ENCODE measurements at regions of chr6 and their contacts with region 1.

Region 1: GRCh38 chr6:16761471-16762267 is 409 bp upstream of the ATXN1 start:
- DNase-seq: peak; percentile 70 to 88
- H3K4me3 ChIP-seq: peak overlapping the region; percentile 63 to 84 (median 66)
- H3K27ac ChIP-seq: no peak overlapping the region
- H3K4me1 ChIP-seq: peaks cover 8 to 22% (median 10%) of the 10 kb centered on the region in 4 experiments; a peak in 6 of 7 replicates
- H3K27me3 ChIP-seq: peaks cover 1 to 24% (median 12%) of the 10 kb centered on the region in 4 experiments; a peak in 6 of 7 replicates
- CTCF ChIP-seq: peak in 1 of 3 experiments; percentile 18; a peak in 1 of 4 replicates
- EP300 ChIP-seq: no peak
- POLR2A ChIP-seq: peak in 1 of 2 experiments; percentile 13; a peak in 1 of 3 replicates
- RAD21 ChIP-seq: peak in 1 of 2 experiments; percentile 40; a peak in 2 of 4 replicates

Region 2: DNA sequence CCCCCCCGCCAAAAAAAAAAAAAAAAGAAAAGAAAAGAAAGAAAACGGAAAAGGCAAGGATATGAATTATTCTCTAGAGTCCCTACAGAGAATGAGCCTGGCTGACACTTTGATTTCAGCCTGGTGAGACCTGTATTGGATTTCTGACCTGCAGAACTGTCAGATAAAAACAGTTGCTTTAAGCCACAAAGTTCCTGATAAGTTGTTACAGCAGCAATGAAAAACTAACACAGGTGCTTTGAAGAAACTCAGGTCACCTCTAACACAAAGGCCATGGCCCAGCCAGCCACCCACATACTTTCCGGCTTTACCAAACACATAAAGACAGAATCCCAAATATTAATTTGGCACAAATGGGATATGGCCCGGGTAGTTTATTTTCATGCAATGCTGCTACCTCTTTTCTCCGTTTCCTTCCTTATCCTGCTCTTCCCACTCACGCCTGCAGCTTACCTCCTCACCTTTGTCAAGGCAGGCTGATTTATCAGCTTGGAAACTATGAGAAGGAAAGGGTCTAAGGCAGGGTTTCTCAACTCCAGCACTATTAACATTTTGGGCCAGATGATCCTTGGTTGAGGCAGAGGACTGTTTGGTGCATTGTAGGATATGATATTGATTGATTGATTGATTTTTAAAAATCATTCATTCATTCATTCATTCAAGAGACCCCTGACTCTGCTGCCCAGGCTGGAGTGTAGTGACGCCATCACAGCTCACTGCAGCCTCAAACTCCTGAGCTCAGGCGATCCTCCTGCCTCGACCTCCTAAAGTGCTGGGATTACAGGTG is 88.5 kb before region 1 on chr6:
- CTCF ChIA-PET with region 1: no interaction called
- POLR2A ChIA-PET with region 1: no interaction called
- DNase-seq: no peak
- H3K4me3 ChIP-seq: no peak overlapping the region
- H3K27ac ChIP-seq: no peak overlapping the region
- H3K4me1 ChIP-seq: peaks cover 0 to 4% (median 2%) of the 10 kb centered on the region in 4 experiments; a peak in 3 of 7 replicates
- H3K27me3 ChIP-seq: no peaks in the 10 kb centered on the region
- CTCF ChIP-seq: no peak
- EP300 ChIP-seq: no peak
- POLR2A ChIP-seq: no peak
- RAD21 ChIP-seq: no peak

Region 3: DNA sequence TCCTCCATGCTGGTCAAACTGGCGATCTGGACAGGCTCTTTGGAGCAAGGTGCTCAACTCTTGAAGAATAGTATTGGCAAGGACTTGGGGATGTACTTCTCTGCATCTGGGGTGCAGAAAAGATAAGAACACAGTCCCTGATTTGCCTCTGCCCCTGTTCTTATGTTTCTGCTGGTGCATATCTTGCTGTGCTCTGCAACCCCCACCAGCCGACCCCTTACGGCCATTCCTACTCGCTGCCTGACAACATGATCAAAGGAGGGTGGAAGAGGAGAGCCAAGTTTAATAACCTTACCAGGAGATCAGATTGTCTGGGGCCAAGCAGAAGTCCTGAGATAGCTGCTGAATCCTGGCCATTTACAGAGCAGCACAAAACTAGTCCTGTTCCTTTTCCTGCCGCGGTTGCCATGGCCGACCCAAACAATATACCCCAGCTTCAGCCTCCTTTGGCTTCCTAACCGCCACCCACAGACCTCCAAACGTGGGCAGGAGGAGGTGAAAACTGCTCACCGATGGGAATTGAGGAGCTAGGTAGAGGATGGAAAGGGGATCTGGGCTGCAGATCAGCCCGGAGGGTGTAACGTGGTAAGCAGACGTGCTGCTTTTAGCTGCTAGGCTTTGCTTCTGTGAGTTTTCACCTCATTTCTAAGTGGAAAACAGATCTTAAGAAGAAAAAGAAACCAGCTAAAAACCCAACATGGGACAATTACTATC is 61.3 kb before region 1 on chr6:
- CTCF ChIA-PET with region 1: interaction called, 13 read pairs
- POLR2A ChIA-PET with region 1: interaction called, 3 read pairs
- DNase-seq: no peak
- H3K4me3 ChIP-seq: no peak overlapping the region
- H3K27ac ChIP-seq: no peak overlapping the region
- H3K4me1 ChIP-seq: peaks cover 0 to 12% (median 4%) of the 10 kb centered on the region in 4 experiments; a peak in 4 of 7 replicates
- H3K27me3 ChIP-seq: no peaks in the 10 kb centered on the region
- CTCF ChIP-seq: no peak
- EP300 ChIP-seq: no peak
- POLR2A ChIP-seq: no peak
- RAD21 ChIP-seq: no peak

Region 4: DNA sequence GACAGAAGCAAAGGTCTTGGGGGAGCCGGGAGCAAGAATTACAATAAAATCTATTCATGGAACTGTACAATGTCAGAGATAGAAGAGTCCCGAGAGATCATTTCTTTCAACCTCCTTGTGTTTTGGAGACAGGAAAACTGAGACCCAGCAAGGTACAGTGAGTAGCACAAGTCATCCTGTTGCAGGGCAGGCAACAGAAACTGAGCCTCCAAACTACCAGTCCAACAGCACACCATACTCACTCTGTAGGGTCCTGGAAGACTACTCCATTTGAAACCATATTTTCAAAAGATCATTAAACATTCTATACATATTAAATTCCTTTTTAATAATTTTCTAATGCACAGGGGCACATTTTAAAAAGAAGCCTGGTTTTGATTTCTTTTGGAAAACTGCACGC is 14.9 kb before region 1 on chr6:
- CTCF ChIA-PET with region 1: interaction called, 16 read pairs
- POLR2A ChIA-PET with region 1: interaction called, 3 read pairs
- DNase-seq: no peak
- H3K4me3 ChIP-seq: no peak overlapping the region
- H3K27ac ChIP-seq: no peak overlapping the region
- H3K4me1 ChIP-seq: no peaks in the 10 kb centered on the region; a peak in 1 of 7 replicates
- H3K27me3 ChIP-seq: no peaks in the 10 kb centered on the region
- CTCF ChIP-seq: no peak
- EP300 ChIP-seq: no peak
- POLR2A ChIP-seq: no peak
- RAD21 ChIP-seq: no peak

Region 5: DNA sequence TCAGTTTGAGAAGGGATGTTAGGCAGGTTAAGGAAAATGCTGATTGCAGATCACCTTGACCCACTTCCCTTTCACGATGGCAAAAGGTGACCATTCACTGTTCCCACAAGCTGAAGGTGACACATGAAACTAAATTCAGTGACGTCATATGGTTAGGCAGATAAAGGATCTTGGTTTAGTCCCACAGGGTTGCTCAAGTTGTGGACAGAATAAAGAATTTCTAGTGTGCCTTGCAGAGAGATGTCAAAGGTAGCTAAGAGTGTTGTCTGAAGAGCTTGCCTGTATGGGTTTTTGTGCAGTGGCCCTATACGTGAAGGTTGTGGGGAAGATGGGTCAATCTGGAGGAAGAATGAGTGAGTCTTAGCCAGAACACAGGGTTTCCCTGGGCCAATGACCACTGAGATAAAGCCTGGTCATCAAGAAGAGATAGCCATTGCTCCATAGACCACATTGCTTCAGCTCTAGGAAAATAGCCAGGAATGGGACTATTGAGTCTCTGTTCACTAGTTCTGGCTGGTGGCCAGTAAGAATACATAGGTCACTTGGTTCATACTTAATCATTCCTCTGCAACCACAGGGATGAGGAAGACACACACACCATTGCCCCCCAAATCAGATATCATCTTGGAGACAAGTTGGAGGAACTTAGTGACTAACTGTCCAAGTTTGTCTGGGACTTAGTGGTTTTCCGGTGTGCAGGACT is 148.1 kb after region 1 on chr6:
- CTCF ChIA-PET with region 1: no interaction called
- POLR2A ChIA-PET with region 1: no interaction called
- DNase-seq: no peak
- H3K4me3 ChIP-seq: no peak overlapping the region
- H3K27ac ChIP-seq: no peak overlapping the region
- H3K4me1 ChIP-seq: no peaks in the 10 kb centered on the region
- H3K27me3 ChIP-seq: no peaks in the 10 kb centered on the region
- CTCF ChIP-seq: no peak
- EP300 ChIP-seq: no peak
- POLR2A ChIP-seq: no peak
- RAD21 ChIP-seq: no peak

Region 6: GRCh38 chr6:16964553-16965501 is 203.2 kb after region 1 on chr6:
- CTCF ChIA-PET with region 1: interaction called, 10 read pairs
- POLR2A ChIA-PET with region 1: no interaction called
- DNase-seq: peak; percentile 71 to 87
- H3K4me3 ChIP-seq: no peak overlapping the region
- H3K27ac ChIP-seq: no peak overlapping the region
- H3K4me1 ChIP-seq: no peaks in the 10 kb centered on the region; a peak in 1 of 7 replicates
- H3K27me3 ChIP-seq: no peaks in the 10 kb centered on the region
- CTCF ChIP-seq: peak; percentile 86 to 99 (median 95)
- EP300 ChIP-seq: no peak
- POLR2A ChIP-seq: no peak
- RAD21 ChIP-seq: peak; percentile 93

Measured in H1 (cell line).